K562 (cell line): ENCODE measurements at regions of chr1 and their contacts with region 1.

Region 1: DNA sequence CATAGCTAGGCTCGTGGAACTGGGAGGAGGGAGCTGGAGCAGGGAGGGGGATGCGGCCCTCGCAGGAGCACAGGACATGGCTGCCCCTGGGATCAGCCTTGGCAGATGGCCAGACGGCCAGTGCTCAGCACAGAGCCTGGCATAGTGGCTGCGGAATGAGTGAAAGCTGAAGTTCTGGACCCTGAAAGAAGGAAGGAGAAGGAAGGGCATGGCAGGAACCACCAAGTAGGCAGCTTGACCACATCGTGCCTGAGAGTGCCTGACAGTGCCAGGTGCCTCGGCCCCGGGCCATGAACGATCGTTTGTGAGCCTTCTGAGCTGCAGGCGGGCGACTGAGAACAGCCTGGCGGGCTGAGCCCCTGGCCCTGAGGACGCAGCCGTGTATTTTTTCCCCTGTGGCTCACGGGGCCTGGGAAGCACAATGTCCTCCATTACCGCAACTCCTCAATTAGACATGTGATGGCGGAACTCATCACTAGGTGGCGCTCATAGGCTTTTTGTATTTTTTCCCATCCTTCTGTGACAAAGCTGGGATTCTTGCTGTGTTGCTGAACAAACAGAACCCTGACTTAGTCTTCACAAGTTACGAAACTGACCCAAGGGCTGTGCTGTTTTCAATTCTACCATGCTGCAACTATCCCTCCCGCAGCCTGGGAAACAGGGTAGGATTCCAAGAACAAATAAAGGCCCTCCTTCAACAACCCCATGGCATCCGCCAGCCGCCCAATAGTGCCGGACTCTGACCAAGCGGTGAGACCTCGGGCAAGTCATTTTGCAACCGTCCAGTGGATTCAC is 29.9 kb upstream of the TMEM61 start:
- DNase-seq: peak; percentile 58 to 74 (median 66)
- ATAC-seq: peak; percentile 87
- H3K4me3 ChIP-seq: no peak overlapping the region
- H3K27ac ChIP-seq: no peak overlapping the region
- H3K4me1 ChIP-seq: peaks cover 4 to 7% of the 10 kb centered on the region in 2 experiments; a peak in 4 of 5 replicates
- H3K27me3 ChIP-seq: peaks cover 0 to 15% of the 10 kb centered on the region in 2 experiments; a peak in 4 of 5 replicates
- CTCF ChIP-seq: peak; percentile 75 to 81 (median 77)
- EP300 ChIP-seq: no peak
- POLR2A ChIP-seq: no peak
- RAD21 ChIP-seq: peak; percentile 80 to 90

Region 2: GRCh38 chr1:54826226-54826816 is 124.2 kb before region 1 on chr1:
- CTCF ChIA-PET with region 1: no interaction called
- POLR2A ChIA-PET with region 1: no interaction called
- in situ Hi-C with region 1: no loop called
- intact Hi-C with region 1: no loop called
- DNase-seq: no peak
- ATAC-seq: no peak
- H3K4me3 ChIP-seq: no peak overlapping the region
- H3K27ac ChIP-seq: no peak overlapping the region
- H3K4me1 ChIP-seq: no peaks in the 10 kb centered on the region
- H3K27me3 ChIP-seq: peaks cover 0 to 2% of the 10 kb centered on the region in 2 experiments; a peak in 1 of 5 replicates
- CTCF ChIP-seq: no peak
- EP300 ChIP-seq: no peak
- POLR2A ChIP-seq: no peak
- RAD21 ChIP-seq: no peak

Region 3: GRCh38 chr1:54989968-54990810 is 39.6 kb after region 1 on chr1:
- CTCF ChIA-PET with region 1: interaction called, 25 read pairs
- POLR2A ChIA-PET with region 1: interaction called, 3 read pairs
- in situ Hi-C with region 1: loop called (anchors 5 kb)
- intact Hi-C with region 1: no loop called
- DNase-seq: peak in 1 of 4 experiments; percentile 23
- ATAC-seq: peak; percentile 24; the same call in 2 of the 3 replicates
- H3K4me3 ChIP-seq: no peak overlapping the region
- H3K27ac ChIP-seq: no peak overlapping the region
- H3K4me1 ChIP-seq: peaks cover 0 to 12% of the 10 kb centered on the region in 2 experiments; a peak in 2 of 5 replicates
- H3K27me3 ChIP-seq: peaks cover 23 to 80% of the 10 kb centered on the region in 2 experiments; a peak in 4 of 5 replicates
- CTCF ChIP-seq: peak in 1 of 3 experiments; percentile 13; a peak in 1 of 6 replicates
- EP300 ChIP-seq: no peak
- POLR2A ChIP-seq: no peak
- RAD21 ChIP-seq: 0 out of 4 replicates have a peak, but pooled peaks of 1 of the 2 experiments have one; percentile 7

Region 4: DNA sequence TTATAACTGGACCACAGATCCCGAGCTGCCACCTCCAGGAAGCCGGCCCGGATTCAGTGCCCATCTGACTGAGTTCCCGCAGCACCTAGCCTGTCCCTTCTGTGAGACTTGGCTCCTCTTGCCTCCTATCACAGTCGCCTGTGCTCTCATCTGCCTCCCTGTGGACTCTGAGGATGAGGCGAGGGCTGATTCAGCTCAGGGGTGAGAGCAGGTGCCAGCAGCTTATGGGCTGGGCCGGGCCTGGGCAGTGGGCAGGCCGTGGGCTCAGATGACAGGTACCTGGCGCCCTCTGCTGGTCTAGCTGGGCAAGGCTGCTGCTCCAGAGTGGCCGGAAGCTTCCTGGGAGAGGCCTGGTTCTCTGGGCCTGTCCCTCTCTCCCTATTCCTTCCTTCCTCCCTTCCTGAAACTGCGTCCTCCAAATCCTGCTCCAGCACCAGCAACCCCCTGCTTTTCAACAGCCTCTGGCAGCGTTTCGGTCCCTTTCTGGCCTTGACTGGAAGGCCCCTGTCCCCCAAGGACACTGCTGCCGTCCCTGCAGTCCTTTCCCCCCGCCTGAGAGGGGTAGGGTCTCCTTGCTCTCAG is 71.5 kb after region 1 on chr1:
- CTCF ChIA-PET with region 1: interaction called, 7 read pairs
- POLR2A ChIA-PET with region 1: interaction called, 3 read pairs
- in situ Hi-C with region 1: no loop called
- intact Hi-C with region 1: loop called (anchors 1 kb)
- DNase-seq: peak; percentile 84 to 92 (median 88)
- ATAC-seq: peak; percentile 100
- H3K4me3 ChIP-seq: no peak overlapping the region
- H3K27ac ChIP-seq: peak overlapping the region; percentile 54; the same call in 1 of the 3 replicates
- H3K4me1 ChIP-seq: peaks cover 3 to 11% of the 10 kb centered on the region in 2 experiments; a peak in 4 of 5 replicates
- H3K27me3 ChIP-seq: peaks cover 3 to 13% of the 10 kb centered on the region in 2 experiments; a peak in 3 of 5 replicates
- CTCF ChIP-seq: peak; percentile 86 to 91 (median 88)
- EP300 ChIP-seq: no peak
- POLR2A ChIP-seq: no peak
- RAD21 ChIP-seq: peak; percentile 69 to 87

Region 5: DNA sequence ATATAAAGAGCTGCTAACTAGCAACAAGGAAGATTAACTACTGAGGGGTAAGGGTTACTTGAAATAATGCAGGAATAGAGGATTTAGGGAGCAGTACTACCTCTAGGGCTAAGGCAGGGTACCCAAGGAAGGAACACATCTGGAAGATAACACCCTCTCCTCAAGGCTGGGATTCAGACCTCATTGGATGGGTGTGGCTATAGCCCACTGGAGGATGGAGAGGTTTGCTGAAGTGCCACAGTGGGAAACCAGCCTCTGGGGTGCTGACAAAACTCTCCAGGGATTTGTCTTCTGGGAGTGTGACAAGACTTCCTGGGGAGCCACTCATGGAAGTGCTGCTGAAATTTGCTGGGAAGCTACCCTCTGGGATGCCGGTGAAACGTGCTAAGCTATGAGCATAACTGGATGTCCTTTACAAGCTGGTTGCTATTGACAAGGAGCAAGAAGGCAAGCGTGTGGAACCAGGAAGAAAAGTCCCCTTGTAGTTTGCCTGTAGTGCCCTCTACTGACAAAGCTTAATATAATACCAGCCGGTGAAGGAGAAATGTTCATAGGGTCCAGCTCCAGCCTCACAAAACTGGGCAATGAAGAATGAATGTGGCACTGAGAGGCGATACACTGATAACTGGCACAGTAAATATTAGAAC is 387.4 kb after region 1 on chr1:
- CTCF ChIA-PET with region 1: no interaction called
- POLR2A ChIA-PET with region 1: no interaction called
- in situ Hi-C with region 1: no loop called
- intact Hi-C with region 1: loop called (anchors 10 kb)
- DNase-seq: peak; percentile 31 to 62 (median 42)
- ATAC-seq: peak; percentile 95
- H3K4me3 ChIP-seq: no peak overlapping the region
- H3K27ac ChIP-seq: no peak overlapping the region
- H3K4me1 ChIP-seq: 0 out of 5 replicates have a peak, but pooled peaks cover 0 to 2% of the 10 kb centered on the region in 2 experiments
- H3K27me3 ChIP-seq: peaks cover 4 to 28% of the 10 kb centered on the region in 2 experiments; a peak in 3 of 5 replicates
- CTCF ChIP-seq: peak; percentile 57 to 80 (median 62)
- EP300 ChIP-seq: no peak
- POLR2A ChIP-seq: no peak
- RAD21 ChIP-seq: peak; percentile 62 to 75